Common myeloid progenitor, CD34-positive (primary cell): ENCODE measurements at regions of chr7 and their contacts with region 1.

Region 1: GRCh38 chr7:5462216-5462615 is 38.6 kb upstream of the TNRC18 start:
- DNase-seq: peak; percentile 90 to 94 (median 94)
- H3K4me3 ChIP-seq: peak overlapping the region in 4 of 7 experiments; percentile 1 to 41 (median 12)
- H3K27ac ChIP-seq: peak overlapping the region; percentile 90 to 93
- H3K4me1 ChIP-seq: peaks cover 10 to 61% (median 56%) of the 10 kb centered on the region in 4 experiments
- H3K27me3 ChIP-seq: no peaks in the 10 kb centered on the region

Region 2: DNA sequence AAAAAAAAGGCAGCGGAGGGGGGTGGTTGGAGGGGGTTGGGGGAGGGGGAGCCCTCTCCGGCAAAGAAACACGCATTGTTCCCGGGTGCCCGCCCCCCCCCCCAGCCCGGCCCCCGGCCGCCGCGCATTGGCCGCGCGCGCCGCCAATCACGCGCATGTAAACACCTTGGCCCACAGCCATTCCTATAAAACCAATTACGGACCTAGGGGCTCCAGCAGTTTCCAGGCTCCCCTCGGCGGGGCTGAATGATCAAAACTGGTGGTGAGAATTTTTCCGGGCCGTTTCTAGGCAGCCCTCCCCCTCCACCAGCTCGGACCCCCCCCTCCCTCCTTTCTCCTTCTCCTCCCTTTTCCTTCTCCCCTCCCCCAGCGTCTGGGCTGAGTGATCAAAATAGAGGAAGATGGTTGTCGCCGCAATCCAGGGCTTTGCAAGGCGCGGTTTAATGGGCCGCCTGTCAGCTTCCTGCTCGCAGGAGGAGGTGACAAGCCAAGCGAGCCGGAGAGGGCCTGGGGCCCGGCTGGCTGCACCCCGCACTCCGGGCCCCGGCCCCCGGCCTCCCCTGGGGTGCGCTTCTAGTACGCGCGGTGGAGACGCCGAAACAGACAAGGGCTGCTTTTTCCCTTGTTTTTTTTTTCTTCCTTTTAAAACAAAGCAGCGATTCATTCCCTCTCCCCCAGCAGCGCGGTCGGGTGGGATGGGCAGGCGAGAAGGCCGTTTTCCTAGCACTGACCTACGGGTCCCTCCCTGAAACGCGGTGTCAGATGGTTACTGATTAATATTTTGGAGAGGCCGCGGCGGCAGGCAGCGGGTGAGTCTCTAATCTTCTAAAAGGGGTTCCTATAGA is 38.1 kb before region 1 on chr7:
- CTCF ChIA-PET with region 1: interaction called, 14 read pairs
- POLR2A ChIA-PET with region 1: interaction called, 13 read pairs
- DNase-seq: peak; percentile 99 to 100 (median 99)
- H3K4me3 ChIP-seq: peak overlapping the region; percentile 91 to 100 (median 95)
- H3K27ac ChIP-seq: peak overlapping the region; percentile 91 to 98
- H3K4me1 ChIP-seq: peaks cover 0 to 25% (median 16%) of the 10 kb centered on the region in 4 experiments
- H3K27me3 ChIP-seq: no peaks in the 10 kb centered on the region